ENCODE measurements at regions of chr2 and their contacts with region 1.

Region 1: GRCh38 chr2:61993444-61994024 is 88.1 kb downstream of the COMMD1 start:
- DNase-seq: peak; percentile 46
- H3K4me3 Mint-ChIP-seq: no peak overlapping the region
- H3K27ac Mint-ChIP-seq: no peak overlapping the region
- H3K4me1 Mint-ChIP-seq: peaks cover 4% of the 10 kb centered on the region
- H3K27me3 Mint-ChIP-seq: no peaks in the 10 kb centered on the region

Region 2: DNA sequence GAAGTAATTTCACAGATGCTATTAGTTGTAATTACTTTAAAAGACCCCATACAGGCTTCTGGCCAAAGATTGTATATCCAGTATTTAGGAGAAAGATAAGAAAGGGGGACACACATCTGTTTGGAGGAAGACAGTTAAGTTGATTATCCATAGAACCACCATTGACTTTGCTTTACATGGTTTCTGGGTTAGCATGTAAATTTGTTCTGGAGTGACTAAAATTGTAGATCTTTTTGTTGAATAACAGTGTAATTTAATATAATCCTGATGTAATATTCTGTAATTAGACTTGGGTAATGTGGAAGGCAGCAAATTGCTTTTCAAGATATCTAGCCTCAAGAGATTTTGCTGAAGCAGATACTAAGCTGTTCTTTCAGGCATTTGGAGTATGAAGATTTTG is 70.8 kb before region 1 on chr2:
- CTCF ChIA-PET with region 1: no interaction called
- intact Hi-C with region 1: loop called (anchors 2 kb)
- DNase-seq: no peak
- H3K4me3 Mint-ChIP-seq: no peak overlapping the region
- H3K27ac Mint-ChIP-seq: no peak overlapping the region
- H3K4me1 Mint-ChIP-seq: no peaks in the 10 kb centered on the region
- H3K27me3 Mint-ChIP-seq: no peaks in the 10 kb centered on the region

Region 3: GRCh38 chr2:62410015-62410453 is 416.5 kb after region 1 on chr2:
- CTCF ChIA-PET with region 1: interaction called, 7 read pairs
- intact Hi-C with region 1: loop called (anchors 1 kb)
- DNase-seq: no peak
- H3K4me3 Mint-ChIP-seq: no peak overlapping the region
- H3K27ac Mint-ChIP-seq: no peak overlapping the region
- H3K4me1 Mint-ChIP-seq: peaks cover 3% of the 10 kb centered on the region
- H3K27me3 Mint-ChIP-seq: no peaks in the 10 kb centered on the region